ENCODE measurements at regions of chr10 and their contacts with region 1.

Region 1: DNA sequence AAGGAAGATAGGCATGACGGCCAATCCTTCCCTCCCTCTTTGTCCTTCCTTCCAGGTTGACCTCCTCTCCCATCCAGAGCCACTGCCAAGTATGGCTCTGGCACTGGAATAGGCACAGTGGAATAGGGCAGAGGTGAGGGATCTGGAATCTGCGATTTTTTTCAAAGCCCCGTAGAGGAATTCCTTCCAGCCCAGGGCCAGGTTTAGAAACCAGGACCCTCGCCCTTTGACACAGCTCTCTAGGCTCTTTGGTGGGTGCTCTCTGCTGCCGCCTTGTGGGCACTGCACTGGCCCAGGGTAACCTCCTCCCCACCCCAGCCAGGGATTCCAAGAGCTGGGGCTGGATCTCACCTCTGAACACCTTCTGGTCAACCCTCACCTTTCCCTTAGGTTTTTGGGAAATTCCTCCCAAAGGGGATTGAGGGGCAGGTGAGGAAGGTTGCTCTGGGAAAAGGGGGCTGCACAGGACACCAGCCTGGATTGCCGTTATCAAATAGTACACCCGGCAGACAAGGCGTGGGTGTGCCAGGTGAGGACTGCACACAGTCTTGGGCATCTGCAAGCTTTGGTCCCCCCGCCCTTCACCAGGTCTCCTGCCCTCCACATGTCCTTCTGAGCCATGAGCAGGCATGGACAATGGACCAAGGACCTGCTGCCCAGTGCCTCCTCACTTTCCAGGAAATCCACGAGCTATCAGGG is 22.8 kb downstream of the C10orf105 start:
- DNase-seq: peak; percentile 83

Region 2: GRCh38 chr10:71708301-71708703 is 11.5 kb after region 1 on chr10:
- CTCF ChIA-PET with region 1: interaction called, 37 read pairs
- POLR2A ChIA-PET with region 1: no interaction called
- DNase-seq: peak; percentile 78